Mammary epithelial cell (primary cell): ENCODE measurements at regions of chr2 and their contacts with region 1.

Region 1: DNA sequence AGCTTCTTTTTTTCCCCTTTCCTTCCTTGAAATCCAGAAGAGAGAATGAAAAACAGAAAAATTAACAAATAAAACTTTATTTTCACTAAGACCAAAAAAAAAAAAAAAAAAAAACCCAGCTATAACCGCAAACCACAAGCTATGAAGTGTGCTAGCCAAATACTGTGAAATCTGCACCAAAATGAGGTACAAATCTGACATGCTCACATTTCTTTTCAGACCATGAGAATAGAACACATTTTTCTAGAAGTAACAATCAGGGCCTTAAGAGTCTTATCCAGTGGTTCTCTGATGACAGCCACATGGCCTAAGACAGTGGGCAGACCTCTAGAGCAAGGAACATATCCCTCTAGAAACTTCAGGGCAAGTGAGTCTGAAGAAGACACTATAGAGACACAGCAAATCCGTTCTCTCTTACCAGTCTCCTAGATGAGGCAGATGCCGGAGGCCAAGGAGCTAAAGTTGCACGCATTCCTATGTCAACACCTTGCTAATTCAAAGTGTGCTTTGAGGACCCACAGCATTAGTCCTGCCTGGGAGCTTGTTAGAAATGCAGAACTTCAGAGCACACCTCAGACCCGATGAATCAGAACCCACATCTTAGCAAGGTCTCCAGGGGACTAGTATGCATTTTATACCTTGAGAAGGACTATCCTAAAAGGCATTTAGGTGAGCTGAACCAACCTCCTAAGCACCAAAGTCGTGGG is 317.1 kb downstream of the MYCN start:
- DNase-seq: no peak
- H3K4me3 ChIP-seq: no peak overlapping the region
- H3K27ac ChIP-seq: no peak overlapping the region
- H3K4me1 ChIP-seq: no peaks in the 10 kb centered on the region
- H3K27me3 ChIP-seq: no peaks in the 10 kb centered on the region
- CTCF ChIP-seq: no peak

Region 2: DNA sequence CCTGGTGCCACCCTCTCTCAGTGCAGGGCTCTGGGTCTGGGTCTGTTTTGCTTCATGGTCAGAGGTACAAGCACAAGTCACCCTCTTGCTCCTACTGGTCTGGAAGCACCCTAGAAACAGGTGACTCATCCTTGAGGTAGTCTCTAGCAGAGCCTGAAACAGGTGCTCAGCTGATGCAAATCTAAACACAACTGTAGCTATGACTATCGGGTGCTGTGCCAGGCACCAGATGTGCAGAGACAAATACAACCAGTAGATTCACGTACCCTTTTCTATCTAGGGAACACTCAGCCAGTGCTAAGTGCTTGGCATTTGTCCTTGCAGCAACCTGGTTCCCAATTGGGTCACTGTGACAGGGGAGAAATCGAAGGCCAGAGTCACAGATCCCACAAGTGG is 458.0 kb before region 1 on chr2:
- CTCF ChIA-PET with region 1: no interaction called
- dilution Hi-C with region 1: no loop called
- in situ Hi-C with region 1: no loop called
- intact Hi-C with region 1: no loop called
- DNase-seq: peak; percentile 69
- H3K4me3 ChIP-seq: no peak overlapping the region
- H3K27ac ChIP-seq: no peak overlapping the region
- H3K4me1 ChIP-seq: no peaks in the 10 kb centered on the region
- H3K27me3 ChIP-seq: no peaks in the 10 kb centered on the region
- CTCF ChIP-seq: no peak

Region 3: DNA sequence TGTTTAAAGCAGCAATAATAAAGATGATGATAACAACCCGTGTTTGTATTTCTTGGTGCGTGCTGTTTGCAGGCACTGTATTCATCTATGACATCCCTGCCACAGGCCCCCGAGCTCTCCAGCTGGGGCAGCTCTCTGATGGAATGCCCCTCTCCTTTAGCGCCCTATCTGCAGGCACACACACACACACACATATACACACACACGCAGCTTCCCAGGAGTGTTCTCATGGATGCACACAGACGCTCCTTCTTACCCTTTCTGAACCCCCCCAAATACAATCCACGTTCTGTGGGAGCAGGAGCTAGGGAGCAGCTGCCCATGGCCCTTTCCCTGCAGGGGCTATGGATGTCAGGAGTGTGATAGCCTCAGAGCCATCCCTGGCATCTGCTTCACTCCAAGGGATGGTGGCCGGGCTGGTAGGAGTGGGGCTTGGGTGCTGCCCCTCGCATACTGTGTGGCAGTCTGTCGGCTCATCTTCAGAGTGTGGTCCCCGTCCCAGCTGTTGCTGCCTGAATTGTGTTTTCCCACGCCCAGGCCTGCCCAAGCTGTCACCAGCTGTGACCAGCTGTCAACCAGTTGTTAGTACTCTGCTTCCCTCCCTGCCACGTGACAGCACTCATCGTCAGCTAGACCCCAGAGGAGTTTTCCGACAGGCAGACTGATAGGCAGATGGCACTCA is 367.9 kb before region 1 on chr2:
- CTCF ChIA-PET with region 1: interaction called, 17 read pairs
- dilution Hi-C with region 1: no loop called
- in situ Hi-C with region 1: no loop called
- intact Hi-C with region 1: no loop called
- DNase-seq: no peak
- H3K4me3 ChIP-seq: no peak overlapping the region
- H3K27ac ChIP-seq: no peak overlapping the region
- H3K4me1 ChIP-seq: no peaks in the 10 kb centered on the region
- H3K27me3 ChIP-seq: no peaks in the 10 kb centered on the region
- CTCF ChIP-seq: no peak

Region 4: DNA sequence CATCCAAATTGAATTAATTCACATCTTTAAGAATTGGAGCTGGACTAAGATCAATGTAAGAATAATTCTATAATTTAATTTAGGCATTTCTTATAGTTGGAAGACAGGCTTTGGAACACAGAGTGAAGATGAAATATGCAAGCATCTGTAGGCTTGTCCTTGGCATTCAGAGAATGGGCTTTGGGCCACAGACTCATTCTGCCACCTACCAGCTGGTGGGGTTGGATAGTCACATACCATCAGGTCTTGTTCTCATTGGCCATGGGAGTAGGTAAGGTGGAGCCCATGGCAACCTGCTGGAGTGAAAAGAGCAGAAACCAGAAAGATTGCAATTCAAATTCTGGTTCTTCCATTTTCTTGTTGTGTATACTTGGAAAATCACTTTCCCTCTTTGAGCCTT is 107.9 kb after region 1 on chr2:
- CTCF ChIA-PET with region 1: no interaction called
- dilution Hi-C with region 1: no loop called
- in situ Hi-C with region 1: no loop called
- intact Hi-C with region 1: no loop called
- DNase-seq: no peak
- H3K4me3 ChIP-seq: no peak overlapping the region
- H3K27ac ChIP-seq: no peak overlapping the region
- H3K4me1 ChIP-seq: no peaks in the 10 kb centered on the region
- H3K27me3 ChIP-seq: no peaks in the 10 kb centered on the region
- CTCF ChIP-seq: no peak